ENCODE measurements at regions of chr2 and their contacts with region 1.

Region 1: DNA sequence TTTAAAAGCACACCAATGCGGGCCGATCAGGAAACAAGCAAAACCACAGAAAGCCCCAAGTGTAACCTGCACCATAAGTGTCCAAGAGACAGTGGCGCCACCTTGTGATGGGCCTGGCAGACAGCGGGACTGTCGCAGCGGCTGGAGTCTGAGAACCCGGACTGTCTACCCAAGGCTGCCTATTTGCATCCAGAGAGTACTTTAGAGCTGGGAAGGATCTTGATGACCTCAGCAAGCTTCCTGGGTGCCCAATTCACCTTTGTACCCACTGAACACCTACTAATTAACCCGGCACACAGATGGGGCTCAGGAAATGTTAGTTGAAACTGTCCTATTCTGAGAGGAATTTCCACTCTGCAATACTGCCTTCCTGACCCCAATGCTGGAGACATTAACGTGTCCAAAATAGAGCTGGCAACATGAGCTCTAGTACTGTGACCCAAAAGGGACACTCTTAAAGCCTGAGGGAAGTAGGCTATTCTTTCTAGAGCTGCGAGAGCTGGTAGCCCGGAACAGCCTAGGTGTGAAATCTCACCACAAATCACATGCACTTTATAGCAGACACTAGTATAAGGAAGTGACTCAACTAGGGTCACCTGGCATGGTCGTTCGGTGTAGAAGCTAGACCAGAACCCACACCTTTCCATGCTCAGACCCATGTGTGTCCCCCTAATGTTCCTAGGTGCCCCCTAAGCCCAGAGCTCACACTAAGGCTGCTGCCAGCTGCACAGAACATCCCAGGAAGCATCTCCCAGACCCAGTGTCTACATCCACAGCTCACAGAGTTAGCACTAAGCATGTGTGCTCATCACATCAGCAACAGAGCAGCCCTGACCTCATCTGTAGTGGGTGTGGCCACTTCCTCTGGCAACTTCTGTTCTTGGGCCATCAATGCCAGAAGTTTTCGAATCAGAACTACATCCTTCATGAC is 25.4 kb downstream of the POLR1A start:
- DNase-seq: peak; percentile 65 to 87 (median 80)
- H3K4me3 ChIP-seq: peak overlapping the region in 1 of 59 donors; percentile 8
- H3K27ac ChIP-seq: peak overlapping the region in 29 of 59 donors; percentile 2 to 77 (median 50)
- H3K27me3 ChIP-seq: no peaks in the 10 kb centered on the region
- CTCF ChIP-seq: peak; percentile 26 to 89 (median 82)

Region 2: GRCh38 chr2:85340034-85340892 is 740.0 kb before region 1 on chr2:
- intact Hi-C with region 1: no loop called
- DNase-seq: peak in 1 of 10 donors; percentile 20
- H3K4me3 ChIP-seq: peak overlapping the region in 8 of 59 donors; percentile 3 to 33 (median 16)
- H3K27ac ChIP-seq: no peak overlapping the region
- H3K27me3 ChIP-seq: peaks cover 0 to 3% (median 0%) of the 10 kb centered on the region in 45 donors
- CTCF ChIP-seq: no peak

Region 3: DNA sequence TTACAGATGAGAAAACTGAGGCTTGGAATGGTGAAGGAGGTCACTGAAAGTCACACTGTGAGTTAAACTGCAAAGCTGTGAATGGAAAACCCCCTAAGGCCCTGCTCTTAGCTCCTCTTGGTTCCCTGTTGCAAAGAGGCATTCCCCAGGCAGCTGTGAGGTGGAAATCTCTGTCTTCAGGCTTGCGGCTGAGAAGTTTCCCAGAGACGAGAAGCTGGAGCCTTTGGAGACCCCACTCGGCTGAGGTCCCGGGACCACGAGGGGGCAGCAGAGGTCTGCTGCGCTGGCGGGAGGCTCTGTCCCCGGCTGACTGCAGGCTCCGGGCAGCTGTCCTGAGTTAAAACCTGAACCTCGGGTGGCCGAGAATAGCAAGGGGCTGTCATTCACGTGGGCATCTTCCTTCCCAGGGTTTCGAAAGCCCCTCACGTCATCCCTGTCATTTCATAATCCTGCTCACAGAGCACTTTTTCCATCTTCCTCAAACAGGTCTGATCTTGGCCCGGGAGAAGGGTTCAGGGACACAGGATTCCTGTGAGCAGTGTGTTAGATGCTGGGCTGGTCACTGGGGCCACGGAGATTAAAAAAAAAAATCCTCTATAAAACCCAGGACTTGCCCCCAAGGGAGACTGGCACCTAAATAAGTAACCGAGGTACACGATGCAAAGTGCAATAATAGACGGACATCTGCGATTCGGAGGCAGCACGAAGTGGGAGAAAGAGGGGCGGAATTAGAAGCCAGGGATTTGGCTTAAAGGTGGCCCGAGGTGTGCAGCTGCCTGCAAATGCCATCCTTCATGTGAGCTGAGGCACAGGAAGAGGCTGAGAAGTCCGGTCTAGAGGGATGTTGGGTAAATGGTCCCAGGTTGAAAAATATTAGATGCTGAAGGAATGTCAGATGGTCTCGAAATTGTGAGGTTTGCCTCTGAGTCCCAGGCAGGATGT is 351.1 kb before region 1 on chr2:
- intact Hi-C with region 1: loop called in 1 of 2 experiments (anchors 10 kb)
- DNase-seq: peak; percentile 83 to 93 (median 88)
- H3K4me3 ChIP-seq: peak overlapping the region in 20 of 59 donors; percentile 1 to 34 (median 16)
- H3K27ac ChIP-seq: peak overlapping the region in 43 of 59 donors; percentile 2 to 78 (median 53)
- H3K27me3 ChIP-seq: no peaks in the 10 kb centered on the region
- CTCF ChIP-seq: peak; percentile 88 to 99 (median 97)

Region 4: GRCh38 chr2:85741833-85742455 is 338.3 kb before region 1 on chr2:
- intact Hi-C with region 1: loop called in 1 of 2 experiments (anchors 5 kb)
- DNase-seq: peak in 9 of 10 donors; percentile 47 to 85 (median 75)
- H3K4me3 ChIP-seq: peak overlapping the region in 44 of 59 donors; percentile 2 to 56 (median 26)
- H3K27ac ChIP-seq: peak overlapping the region; percentile 78 to 100 (median 98)
- H3K27me3 ChIP-seq: no peaks in the 10 kb centered on the region
- CTCF ChIP-seq: peak in 10 of 56 donors; percentile 9 to 27 (median 16)

Region 5: DNA sequence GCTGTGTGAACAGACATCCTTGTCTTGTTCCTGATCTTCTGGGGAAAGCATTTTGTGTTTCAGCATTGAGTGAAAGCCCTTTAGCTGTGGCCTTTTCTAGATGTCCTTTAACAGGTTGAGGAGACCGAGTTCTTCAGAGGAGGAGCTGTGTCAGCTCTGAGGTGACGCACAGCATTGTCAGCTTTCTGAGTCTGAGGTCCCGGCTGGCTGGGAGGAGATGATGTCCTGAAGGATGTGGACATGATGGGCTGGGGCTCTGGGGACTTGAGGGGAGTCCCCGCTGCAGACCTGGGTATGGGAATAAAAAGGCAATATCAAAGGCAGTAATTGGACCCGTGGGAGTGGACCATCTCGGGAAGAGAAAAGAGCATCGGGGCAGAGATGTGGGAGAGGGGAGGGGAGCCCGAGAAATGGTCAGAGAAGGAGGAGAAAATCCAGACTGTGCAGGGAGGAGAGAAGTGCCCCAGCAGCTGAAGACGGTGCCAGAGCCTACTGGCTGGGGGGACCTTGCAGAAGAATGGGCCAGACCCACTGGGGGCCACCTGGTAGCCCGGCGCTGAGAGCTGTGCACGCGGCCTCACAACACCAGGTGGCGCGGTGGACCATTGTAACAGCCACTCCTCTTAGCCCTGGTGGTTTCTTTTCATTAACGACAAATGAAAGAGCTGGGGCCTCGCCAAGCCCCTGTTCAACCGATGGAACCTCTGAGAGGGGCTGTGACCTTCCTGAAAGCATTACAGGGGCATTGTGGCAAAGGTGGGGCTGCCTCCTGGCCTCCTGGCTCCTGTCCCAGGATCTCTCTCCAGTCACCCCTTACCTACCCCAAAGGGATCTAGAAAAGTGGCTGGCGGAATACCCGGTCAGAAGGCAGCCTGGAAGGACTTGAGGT is 253.0 kb before region 1 on chr2:
- intact Hi-C with region 1: loop called (anchors 1 to 2 kb)
- DNase-seq: peak; percentile 65 to 83 (median 78)
- H3K4me3 ChIP-seq: peak overlapping the region in 53 of 59 donors; percentile 0 to 62 (median 37)
- H3K27ac ChIP-seq: peak overlapping the region in 2 of 59 donors; percentile 23 to 29
- H3K27me3 ChIP-seq: no peaks in the 10 kb centered on the region
- CTCF ChIP-seq: peak; percentile 64 to 99 (median 95)

Region 6: GRCh38 chr2:85924522-85924921 is 155.7 kb before region 1 on chr2:
- intact Hi-C with region 1: loop called in 1 of 2 experiments (anchors 5 kb)
- DNase-seq: peak in 2 of 10 donors; percentile 34 to 42
- H3K4me3 ChIP-seq: peak overlapping the region in 1 of 59 donors; percentile 14
- H3K27ac ChIP-seq: peak overlapping the region; percentile 71 to 99 (median 95)
- H3K27me3 ChIP-seq: no peaks in the 10 kb centered on the region
- CTCF ChIP-seq: peak in 2 of 56 donors; percentile 17 to 18

Region 7: DNA sequence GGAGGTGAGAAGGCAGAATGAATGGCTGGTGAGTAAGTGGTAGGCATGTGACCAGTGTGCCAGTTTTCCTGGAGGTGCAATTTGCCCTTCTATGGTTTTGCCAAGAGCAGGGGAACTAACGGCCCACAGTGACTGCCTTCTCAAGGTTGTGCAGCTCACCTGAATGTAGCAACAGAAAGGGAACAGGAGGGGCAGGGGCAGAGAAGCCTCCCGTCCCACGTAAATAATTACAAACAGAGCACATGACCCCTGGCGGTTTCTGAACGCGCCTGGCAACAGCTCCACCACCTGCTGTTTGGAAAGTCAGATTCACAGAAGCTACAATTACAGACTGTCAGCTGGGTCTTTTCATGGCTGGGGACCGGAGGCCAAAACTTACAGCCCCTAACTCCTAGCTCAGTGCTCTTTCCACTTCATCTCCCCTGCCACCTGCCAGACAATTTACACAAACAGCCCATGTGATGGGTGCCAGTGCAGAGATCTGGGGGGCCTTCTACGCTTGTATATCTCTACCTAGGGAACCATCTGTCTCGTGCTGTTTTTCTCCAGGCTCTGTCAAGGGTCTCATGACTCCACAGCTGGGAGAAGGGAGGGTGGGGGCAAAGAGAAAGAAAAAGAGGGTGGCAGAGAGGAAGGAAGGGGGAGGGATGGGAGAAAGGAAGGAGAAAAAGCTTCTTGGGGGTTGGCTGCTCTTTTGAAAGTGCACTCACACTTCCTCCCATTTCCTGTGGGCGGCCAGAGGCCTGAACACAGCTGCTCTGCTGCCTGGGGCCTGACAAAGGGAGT is 44.2 kb before region 1 on chr2:
- intact Hi-C with region 1: loop called in 1 of 2 experiments (anchors 5 kb)
- DNase-seq: peak in 9 of 10 donors; percentile 51 to 80 (median 65)
- H3K4me3 ChIP-seq: peak overlapping the region in 9 of 59 donors; percentile 6 to 32 (median 13)
- H3K27ac ChIP-seq: peak overlapping the region; percentile 76 to 99 (median 95)
- H3K27me3 ChIP-seq: no peaks in the 10 kb centered on the region
- CTCF ChIP-seq: peak in 39 of 56 donors; percentile 10 to 64 (median 38)